Activated T-helper 2 cell treated with anti-CD3 and anti-CD28 coated beads, Interferon-gamma antibody, Interleukin-2, Interleukin-4, amounts not matched to agents 10 μg/mL and 5 μg/mL and 100 μg/mL, durations not matched to agents 14 hours and 24 hours and 36 hours (primary cell): ENCODE measurements at regions of chr3 and their contacts with region 1.

Region 1: DNA sequence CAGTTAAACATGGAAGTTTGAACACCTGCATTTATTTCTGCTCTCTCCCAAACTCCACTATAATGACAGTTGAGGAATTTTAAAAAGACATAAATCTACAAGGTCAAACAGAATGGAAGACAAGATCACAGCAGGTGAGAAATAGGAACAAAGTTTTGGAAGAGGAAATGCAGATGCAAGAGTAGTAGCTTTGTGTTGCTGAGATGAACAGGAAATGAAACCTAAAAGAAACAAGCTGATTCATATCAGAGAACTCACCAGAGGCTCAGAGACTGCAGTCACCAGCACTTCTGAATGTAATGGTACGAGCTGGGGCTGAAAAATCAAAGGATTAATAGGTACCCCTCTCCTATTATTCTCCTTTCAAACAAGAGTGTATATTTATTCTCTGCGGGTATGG is 459.9 kb downstream of the RAP2B start:
- DNase-seq: no peak
- H3K4me3 Mint-ChIP-seq: peak overlapping the region; percentile 47
- H3K27ac Mint-ChIP-seq: peak overlapping the region; percentile 89
- H3K4me1 Mint-ChIP-seq: peaks cover 54% of the 10 kb centered on the region
- H3K27me3 Mint-ChIP-seq: no peaks in the 10 kb centered on the region

Region 2: GRCh38 chr3:153043729-153044328 is 578.1 kb before region 1 on chr3:
- intact Hi-C with region 1: loop called (anchors 2 kb)
- DNase-seq: no peak
- H3K4me3 Mint-ChIP-seq: no peak overlapping the region
- H3K27ac Mint-ChIP-seq: no peak overlapping the region
- H3K4me1 Mint-ChIP-seq: peaks cover 5% of the 10 kb centered on the region
- H3K27me3 Mint-ChIP-seq: peaks cover 4% of the 10 kb centered on the region

Region 3: DNA sequence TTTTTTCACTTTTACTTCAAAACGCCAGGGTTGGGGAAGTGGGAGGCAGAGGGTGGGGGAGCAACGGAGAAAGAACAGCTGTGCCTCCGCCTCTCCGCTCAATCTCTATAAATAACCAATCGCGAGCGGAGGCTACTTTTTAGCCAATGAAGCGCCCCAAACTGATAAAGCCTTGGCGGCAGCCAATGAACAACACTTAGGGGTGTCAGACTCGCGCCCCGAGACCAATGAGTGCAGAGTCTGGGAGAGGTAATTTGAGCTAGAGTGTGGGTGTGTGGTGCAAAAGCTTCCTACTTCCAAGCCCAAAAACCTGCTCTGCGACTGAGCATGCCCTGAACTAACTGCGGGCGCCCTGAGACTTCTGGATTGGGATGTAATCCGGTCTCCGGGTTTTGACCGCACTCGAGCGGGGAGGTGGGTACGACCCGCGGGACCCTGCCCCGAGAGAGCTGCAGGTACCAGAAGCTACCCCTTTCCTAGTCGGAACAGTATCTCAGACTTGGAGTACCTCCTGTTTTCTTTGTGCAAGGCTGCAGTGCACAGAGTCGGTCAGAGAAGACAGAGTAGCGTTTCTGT is 460.7 kb before region 1 on chr3:
- intact Hi-C with region 1: loop called (anchors 1 kb)
- DNase-seq: peak; percentile 93
- H3K4me3 Mint-ChIP-seq: peak overlapping the region; percentile 94
- H3K27ac Mint-ChIP-seq: peak overlapping the region; percentile 97
- H3K4me1 Mint-ChIP-seq: peaks cover 31% of the 10 kb centered on the region
- H3K27me3 Mint-ChIP-seq: no peaks in the 10 kb centered on the region

Region 4: DNA sequence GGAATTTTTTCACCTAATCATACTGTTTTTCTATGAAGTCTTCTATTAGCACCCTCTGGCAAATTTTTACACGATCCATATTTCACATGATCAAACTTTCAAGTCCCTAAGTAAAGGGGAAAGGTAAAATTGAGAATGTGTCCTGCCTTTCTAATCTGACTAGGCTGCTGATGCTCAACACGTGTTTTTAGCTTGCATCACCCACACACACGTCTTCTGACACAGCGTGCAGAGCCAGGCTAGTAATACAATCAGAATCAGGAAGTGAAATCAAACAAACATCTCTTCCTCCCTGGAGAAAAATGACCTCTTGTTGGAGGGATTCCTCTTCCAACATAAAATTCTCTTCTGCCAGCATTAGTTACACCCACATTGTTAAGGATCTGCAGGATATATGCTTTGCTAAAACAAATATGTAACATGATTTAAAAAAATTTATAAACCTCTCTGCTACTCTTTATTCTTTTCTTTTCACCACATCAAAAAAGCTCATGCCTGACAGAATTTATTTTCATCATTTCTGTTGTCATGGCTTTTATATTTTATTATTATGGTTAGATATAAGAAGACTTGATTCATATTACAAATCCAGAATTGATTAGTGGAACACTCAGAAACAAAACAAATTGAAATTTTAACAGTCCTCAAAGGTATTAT is 337.5 kb before region 1 on chr3:
- intact Hi-C with region 1: loop called (anchors 10 kb)
- DNase-seq: no peak
- H3K4me3 Mint-ChIP-seq: no peak overlapping the region
- H3K27ac Mint-ChIP-seq: no peak overlapping the region
- H3K4me1 Mint-ChIP-seq: peaks cover 28% of the 10 kb centered on the region
- H3K27me3 Mint-ChIP-seq: no peaks in the 10 kb centered on the region

Region 5: GRCh38 chr3:153484842-153485241 is 137.1 kb before region 1 on chr3:
- intact Hi-C with region 1: no loop called
- DNase-seq: no peak
- H3K4me3 Mint-ChIP-seq: no peak overlapping the region
- H3K27ac Mint-ChIP-seq: no peak overlapping the region
- H3K4me1 Mint-ChIP-seq: peaks cover 15% of the 10 kb centered on the region
- H3K27me3 Mint-ChIP-seq: peaks cover 4% of the 10 kb centered on the region

Region 6: DNA sequence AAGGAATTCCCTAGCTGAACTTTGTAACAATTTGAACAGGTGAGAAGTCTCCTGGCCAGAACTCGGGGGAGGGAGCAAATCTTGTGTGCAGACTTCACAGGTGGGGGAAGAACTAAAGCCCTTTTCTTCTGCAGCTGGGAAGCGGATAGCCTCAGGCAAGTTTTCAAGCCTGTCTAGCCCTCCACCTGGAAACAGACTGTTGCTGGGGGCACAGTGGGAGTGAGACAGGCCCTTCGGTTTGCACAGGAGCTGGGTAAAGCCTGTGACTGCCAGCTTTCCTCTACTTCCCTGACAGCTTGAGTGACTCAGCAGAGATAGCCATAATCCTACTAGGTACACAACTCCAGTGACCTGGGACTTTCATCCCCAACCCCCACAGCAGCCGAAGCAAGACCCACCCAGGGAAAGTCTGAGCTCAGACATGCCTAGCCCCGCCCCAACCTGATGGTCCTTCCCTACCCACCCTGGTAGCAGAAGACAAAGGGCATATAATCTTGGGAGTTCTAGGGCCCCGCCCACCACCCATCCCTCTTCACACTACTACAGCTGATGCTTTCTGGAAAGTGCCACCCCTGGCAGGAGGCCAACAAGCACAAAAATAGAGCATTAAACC is 18.8 kb after region 1 on chr3:
- intact Hi-C with region 1: loop called (anchors 1 kb)
- DNase-seq: no peak
- H3K4me3 Mint-ChIP-seq: no peak overlapping the region
- H3K27ac Mint-ChIP-seq: no peak overlapping the region
- H3K4me1 Mint-ChIP-seq: peaks cover 31% of the 10 kb centered on the region
- H3K27me3 Mint-ChIP-seq: no peaks in the 10 kb centered on the region

Region 7: DNA sequence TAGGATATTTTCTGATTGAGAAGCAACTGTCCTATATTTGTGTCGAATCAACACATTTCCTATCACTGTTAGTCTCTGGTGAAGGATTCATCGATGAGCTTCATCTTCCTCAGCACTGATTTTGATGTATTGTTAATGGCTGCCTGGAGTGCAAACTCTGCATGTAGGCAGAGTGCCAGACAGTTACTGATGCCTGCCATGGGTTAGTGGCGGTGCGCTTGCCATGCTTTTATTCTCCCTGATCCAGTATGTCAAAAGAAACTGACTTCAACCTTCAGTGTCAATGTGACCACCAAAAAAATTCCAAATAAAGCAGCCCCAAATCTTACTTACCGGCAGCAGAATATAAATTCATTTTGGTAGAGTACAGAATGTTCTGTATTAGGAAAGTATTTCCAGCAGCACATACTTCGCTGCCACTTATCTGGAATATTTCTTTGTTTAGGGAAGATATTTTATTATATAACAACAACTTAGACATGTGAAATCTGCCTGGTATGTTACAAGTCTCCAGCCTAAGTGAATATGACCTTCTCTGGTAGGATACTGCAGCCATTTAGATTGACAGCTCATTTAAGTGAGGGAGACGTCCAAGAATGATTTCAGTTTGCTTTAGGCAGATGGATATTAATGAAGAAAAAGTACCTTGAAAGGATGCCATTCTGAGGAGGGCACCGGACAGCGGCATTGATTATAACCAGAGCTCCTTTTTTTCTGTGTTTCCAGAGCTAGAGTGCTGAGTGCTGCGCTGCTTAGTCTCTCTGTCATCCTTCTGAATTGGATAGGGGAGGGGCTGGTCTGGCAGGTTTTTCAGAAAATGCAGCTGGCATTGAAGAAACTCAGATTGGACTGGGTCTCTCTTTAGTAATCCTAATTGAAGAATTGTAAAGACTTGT is 559.1 kb after region 1 on chr3:
- intact Hi-C with region 1: no loop called
- DNase-seq: no peak
- H3K4me3 Mint-ChIP-seq: no peak overlapping the region
- H3K27ac Mint-ChIP-seq: no peak overlapping the region
- H3K4me1 Mint-ChIP-seq: no peaks in the 10 kb centered on the region
- H3K27me3 Mint-ChIP-seq: no peaks in the 10 kb centered on the region

Region 8: DNA sequence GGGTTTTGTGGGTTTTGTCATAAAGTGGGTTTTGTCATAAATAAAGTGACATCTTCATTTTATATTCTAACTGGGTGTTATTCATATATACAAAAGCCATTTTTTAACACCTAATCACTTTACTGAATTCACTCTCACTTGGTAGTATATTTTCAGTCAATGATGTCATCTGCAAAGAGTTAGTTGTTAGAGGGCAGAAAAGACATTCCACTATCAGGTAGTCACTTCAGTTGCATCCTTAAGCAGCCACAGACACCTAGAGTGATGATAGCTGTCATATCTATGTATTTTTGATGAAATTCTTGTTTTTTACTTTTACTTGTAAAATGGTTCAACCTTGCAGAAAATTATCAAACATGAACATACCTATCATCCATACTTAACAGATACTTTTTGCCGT is 613.4 kb after region 1 on chr3:
- intact Hi-C with region 1: loop called (anchors 5 kb)
- DNase-seq: no peak
- H3K4me3 Mint-ChIP-seq: no peak overlapping the region
- H3K27ac Mint-ChIP-seq: no peak overlapping the region
- H3K4me1 Mint-ChIP-seq: peaks cover 21% of the 10 kb centered on the region
- H3K27me3 Mint-ChIP-seq: no peaks in the 10 kb centered on the region